Activated CD8-positive, alpha-beta memory T cell treated with anti-CD3 and anti-CD28 coated beads, Interleukin-2, amount 10 ng/mL, durations not matched to agents 7 days and 5 days (primary cell): ENCODE measurements at regions of chr4 and their contacts with region 1.

Region 1: DNA sequence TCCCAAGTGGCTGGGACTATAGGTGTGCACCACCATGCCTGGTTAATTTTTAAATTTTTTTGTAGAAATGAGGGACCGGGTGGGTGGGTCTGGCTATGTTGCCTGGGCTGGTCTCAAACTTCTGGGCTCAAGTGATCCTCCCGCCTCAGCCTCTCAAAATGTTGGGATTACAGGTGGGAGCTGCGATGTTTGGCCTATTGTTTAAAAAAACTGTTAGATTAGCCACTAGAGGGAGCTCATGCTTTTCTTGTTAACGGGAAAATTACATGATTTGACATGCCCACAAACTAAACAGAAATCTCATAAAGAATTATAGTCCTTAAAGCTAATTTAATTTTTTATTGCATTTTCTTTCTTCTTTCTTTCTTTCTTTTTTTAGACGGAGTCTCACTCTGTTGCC is 5.0 kb upstream of the SDAD1 start:
- DNase-seq: no peak
- ATAC-seq: peak; percentile 20
- H3K4me3 Mint-ChIP-seq: no peak overlapping the region
- H3K27ac Mint-ChIP-seq: no peak overlapping the region
- H3K4me1 Mint-ChIP-seq: peaks cover 19% of the 10 kb centered on the region
- H3K27me3 Mint-ChIP-seq: peaks cover 2% of the 10 kb centered on the region

Region 2: DNA sequence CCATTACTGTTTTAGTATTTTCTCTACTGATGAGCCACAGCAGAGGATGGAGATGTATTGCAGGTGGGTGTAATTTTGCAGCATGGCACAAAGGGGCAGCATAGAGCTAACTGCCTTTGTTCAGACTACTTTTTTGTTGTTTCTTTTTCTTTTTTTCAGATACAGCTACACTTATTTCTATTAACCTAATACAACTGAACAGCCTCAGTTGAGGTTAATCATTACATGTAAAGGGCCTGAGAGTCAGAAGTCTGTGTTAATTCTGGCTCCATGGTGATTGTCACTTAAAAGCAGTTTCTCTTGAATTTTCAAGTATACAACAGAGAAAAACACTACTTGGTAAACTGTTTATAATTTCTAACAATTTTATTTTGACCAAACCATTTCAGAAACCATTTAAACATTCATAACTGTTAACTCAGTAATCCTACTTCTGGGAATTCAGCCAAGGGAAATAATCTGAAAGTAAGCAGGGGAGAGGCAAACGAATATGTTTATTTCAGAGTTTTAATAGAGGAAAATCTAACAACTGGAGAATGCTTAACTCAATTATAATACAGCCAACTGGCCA is 79.6 kb before region 1 on chr4:
- CTCF ChIA-PET with region 1: interaction called, 10 read pairs
- DNase-seq: peak; percentile 50
- ATAC-seq: peak; percentile 66
- H3K4me3 Mint-ChIP-seq: no peak overlapping the region
- H3K27ac Mint-ChIP-seq: peak overlapping the region; percentile 39
- H3K4me1 Mint-ChIP-seq: peaks cover 1% of the 10 kb centered on the region
- H3K27me3 Mint-ChIP-seq: no peaks in the 10 kb centered on the region

Region 3: GRCh38 chr4:76035141-76035540 is 39.4 kb after region 1 on chr4:
- CTCF ChIA-PET with region 1: interaction called, 10 read pairs
- DNase-seq: no peak
- ATAC-seq: no peak
- H3K4me3 Mint-ChIP-seq: no peak overlapping the region
- H3K27ac Mint-ChIP-seq: no peak overlapping the region
- H3K4me1 Mint-ChIP-seq: peaks cover 16% of the 10 kb centered on the region
- H3K27me3 Mint-ChIP-seq: peaks cover 18% of the 10 kb centered on the region

Region 4: DNA sequence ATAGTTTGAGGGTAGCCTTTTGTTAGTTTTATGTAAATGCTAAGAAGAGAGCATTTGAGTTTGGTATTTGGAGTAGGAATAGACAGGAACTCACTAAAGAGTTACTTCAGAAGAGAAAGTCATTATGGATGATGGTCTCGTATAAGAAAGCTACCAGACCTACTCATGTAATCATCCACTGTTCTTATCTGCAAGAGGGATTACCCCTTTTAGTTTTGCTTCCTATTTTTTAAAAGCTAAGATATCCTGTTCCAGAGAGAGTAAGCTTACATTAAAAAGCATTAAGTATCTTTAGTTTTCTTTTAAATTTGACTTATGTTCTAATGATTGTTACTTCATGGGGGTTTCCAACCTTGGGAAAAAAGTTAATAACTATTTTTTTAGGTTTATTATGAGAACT is 66.3 kb after region 1 on chr4:
- CTCF ChIA-PET with region 1: interaction called, 41 read pairs
- DNase-seq: no peak
- ATAC-seq: no peak
- H3K4me3 Mint-ChIP-seq: no peak overlapping the region
- H3K27ac Mint-ChIP-seq: no peak overlapping the region
- H3K4me1 Mint-ChIP-seq: peaks cover 50% of the 10 kb centered on the region
- H3K27me3 Mint-ChIP-seq: no peaks in the 10 kb centered on the region

Region 5: DNA sequence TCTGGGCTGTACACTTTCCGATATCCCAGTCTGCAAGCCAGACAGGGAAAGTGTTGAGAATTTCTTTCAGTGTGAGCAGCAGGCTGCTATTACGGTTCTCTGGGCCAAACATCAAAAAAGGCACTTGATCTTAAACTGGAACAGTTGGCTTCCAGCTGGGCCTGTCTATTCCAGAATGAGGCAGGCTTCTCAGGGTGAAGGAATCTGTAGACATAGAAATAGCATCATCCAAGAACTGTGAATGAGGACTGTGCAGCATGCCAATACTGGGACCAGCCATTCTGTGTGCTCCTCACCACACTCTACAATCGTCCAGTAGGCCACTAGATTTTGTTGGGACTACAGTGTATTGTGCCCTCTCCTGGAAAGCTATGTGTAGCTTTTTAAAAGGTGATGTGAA is 109.9 kb after region 1 on chr4:
- CTCF ChIA-PET with region 1: interaction called, 12 read pairs
- DNase-seq: no peak
- ATAC-seq: no peak
- H3K4me3 Mint-ChIP-seq: no peak overlapping the region
- H3K27ac Mint-ChIP-seq: no peak overlapping the region
- H3K4me1 Mint-ChIP-seq: no peaks in the 10 kb centered on the region
- H3K27me3 Mint-ChIP-seq: peaks cover 12% of the 10 kb centered on the region

Region 6: GRCh38 chr4:76117536-76117935 is 121.8 kb after region 1 on chr4:
- CTCF ChIA-PET with region 1: no interaction called
- DNase-seq: no peak
- ATAC-seq: no peak
- H3K4me3 Mint-ChIP-seq: no peak overlapping the region
- H3K27ac Mint-ChIP-seq: no peak overlapping the region
- H3K4me1 Mint-ChIP-seq: no peaks in the 10 kb centered on the region
- H3K27me3 Mint-ChIP-seq: no peaks in the 10 kb centered on the region